HCT116 (cell line): ENCODE measurements at regions of chr12 and their contacts with region 1.

Region 1: DNA sequence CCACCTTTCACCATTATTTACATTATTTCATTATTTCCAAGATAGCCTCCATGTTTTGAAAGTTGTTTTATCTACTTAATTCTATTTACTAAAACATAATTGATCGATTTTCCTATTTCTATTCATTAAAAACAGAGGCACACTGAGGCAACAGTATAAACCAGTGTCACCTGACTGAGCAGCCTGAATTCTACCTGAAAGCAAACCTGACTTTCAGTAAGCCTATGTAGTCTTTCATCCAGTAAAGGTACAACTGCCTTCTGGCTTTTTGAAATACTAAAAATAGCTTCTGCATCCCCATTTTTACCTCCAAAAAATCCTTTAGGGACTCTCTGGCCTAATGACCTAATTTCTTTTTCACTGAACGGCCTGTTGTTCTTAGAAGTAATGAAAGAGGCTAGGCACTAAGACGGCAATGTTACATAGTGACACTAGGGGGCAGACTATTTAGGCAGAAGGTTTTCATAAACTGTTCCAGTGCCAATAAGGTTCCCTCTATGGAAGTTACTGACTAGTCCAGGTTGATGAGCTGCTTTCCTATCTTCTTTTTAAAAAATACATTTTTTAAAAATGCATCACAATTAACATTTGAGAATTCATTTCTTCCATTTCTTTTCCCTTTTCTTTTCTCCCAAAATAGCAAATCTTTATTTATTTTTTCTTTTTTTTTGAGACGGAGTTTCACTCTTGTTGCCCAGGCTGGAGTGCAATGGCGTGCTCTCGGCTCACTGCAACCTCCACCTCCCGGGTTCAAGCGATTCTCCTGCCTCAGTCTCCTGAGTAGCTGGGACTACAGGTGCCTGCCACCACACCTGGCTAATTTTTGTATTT is 17.5 kb downstream of the ANAPC5 start:
- DNase-seq: peak; percentile 46
- ATAC-seq: peak; percentile 94
- H3K4me3 ChIP-seq: no peak overlapping the region
- H3K27ac ChIP-seq: no peak overlapping the region
- H3K4me1 ChIP-seq: no peaks in the 10 kb centered on the region
- H3K27me3 ChIP-seq: no peaks in the 10 kb centered on the region
- CTCF ChIP-seq: peak; percentile 72 to 86 (median 74); a peak in 5 of 6 replicates
- POLR2A ChIP-seq: no peak
- RAD21 ChIP-seq: peak; percentile 67

Region 2: DNA sequence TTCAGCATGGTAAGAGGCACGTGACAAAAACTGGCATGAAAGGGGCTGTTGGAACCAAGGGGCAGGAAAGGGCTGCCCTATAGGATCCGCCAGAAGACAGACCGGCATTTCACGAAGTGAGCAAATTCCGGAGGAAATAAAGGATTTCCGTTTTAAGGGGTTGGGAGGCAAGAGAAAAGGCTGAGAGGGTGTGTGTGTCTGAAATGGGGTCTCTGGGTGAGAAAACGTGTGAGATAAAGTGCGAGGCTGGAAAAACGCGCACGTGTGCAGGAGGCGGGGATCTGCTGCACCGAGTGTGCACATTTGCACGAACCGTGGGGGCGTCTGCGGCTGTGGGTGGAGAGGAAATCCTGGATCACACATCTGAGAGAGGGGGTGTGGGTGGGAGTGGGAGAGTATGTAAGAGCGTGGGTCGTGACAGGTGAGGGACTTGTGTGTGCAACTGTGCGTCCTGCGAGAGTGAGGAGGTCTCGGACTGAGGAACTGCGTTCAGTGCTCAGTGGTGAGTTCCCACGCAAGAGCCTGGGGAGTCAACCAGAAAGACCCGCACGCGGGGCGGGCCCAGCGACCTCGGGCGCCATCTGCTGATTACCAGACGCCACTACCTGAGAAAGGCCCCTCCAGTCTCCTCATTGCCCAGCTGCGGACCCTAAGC is 239.1 kb before region 1 on chr12:
- CTCF ChIA-PET with region 1: no interaction called
- POLR2A ChIA-PET with region 1: no interaction called
- RAD21 ChIA-PET with region 1: no interaction called
- intact Hi-C with region 1: no loop called
- DNase-seq: peak; percentile 48
- ATAC-seq: peak; percentile 97
- H3K4me3 ChIP-seq: peak overlapping the region; percentile 36 to 52
- H3K27ac ChIP-seq: no peak overlapping the region
- H3K4me1 ChIP-seq: peaks cover 3 to 14% of the 10 kb centered on the region in 2 experiments; a peak in 3 of 4 replicates
- H3K27me3 ChIP-seq: no peaks in the 10 kb centered on the region
- CTCF ChIP-seq: peak; percentile 68 to 84 (median 70)
- POLR2A ChIP-seq: peak; percentile 23
- RAD21 ChIP-seq: peak; percentile 81

Region 3: DNA sequence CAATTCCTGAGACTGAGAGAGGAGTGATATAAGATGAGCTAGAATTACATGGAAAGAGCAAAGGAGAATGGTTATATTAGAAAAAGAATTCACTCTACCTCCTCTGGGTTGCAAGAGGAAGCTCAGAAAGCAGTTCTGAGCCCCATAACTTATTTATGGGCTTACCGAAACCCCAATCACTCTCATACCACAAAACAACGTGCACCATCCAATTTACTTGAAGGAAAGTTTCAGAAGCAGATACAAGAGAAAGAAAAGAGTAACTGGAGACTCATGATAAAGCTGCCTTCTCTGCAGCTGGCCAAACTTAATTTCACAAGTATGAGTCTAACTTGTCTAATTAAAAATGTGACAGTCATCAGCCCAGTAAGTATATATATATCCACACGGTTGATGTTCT is 10.8 kb before region 1 on chr12:
- CTCF ChIA-PET with region 1: interaction called, 15 read pairs
- POLR2A ChIA-PET with region 1: no interaction called
- RAD21 ChIA-PET with region 1: no interaction called
- intact Hi-C with region 1: no loop called
- DNase-seq: no peak
- ATAC-seq: no peak
- H3K4me3 ChIP-seq: no peak overlapping the region
- H3K27ac ChIP-seq: no peak overlapping the region
- H3K4me1 ChIP-seq: no peaks in the 10 kb centered on the region
- H3K27me3 ChIP-seq: no peaks in the 10 kb centered on the region
- CTCF ChIP-seq: no peak
- POLR2A ChIP-seq: no peak
- RAD21 ChIP-seq: no peak

Region 4: DNA sequence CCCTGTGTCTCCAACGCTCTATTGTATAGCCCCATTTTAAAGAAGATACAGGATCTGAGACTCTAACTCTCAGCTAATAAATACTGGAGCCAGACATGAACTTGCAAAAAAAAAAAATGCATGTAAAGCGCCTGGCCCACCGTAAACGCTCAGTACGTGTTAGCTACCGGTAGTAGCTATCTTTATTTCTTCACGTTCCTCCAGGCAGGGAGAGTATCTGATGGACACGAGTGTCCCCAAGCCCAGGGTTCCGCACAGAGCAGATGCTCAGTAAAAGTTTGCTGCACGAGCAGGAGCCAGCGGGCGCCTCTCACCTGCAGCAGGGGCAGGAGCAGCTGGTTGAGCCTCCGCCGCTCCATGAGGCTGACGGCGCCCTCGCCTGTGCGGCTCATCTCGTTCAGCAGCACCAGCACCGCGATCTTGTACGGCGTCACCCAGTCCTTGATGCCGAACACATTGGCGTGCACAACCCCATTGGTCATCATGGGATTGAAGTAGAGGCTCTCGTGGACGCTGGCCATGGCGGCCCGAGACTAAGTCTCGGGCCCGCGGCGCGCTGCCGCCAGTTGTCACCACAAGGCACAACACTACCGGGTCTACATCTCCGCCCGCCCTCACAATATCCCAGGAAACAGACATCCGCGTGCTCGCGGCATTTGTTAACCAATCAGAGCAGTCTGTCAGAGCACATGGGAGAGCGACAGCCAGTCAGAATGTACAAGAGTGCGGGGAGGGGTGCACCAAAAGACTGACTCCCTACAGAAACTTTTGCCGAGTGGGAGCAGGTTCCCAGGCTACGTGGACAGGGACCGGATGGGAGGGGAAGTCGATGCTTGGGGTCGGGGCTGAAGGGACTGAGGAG is 17.3 kb after region 1 on chr12 and contains the start of gene ANAPC5:
- CTCF ChIA-PET with region 1: no interaction called
- POLR2A ChIA-PET with region 1: interaction called, 6 read pairs
- RAD21 ChIA-PET with region 1: interaction called in 1 of 2 experiments, 11 read pairs
- intact Hi-C with region 1: no loop called
- DNase-seq: peak; percentile 98
- ATAC-seq: peak; percentile 96
- H3K4me3 ChIP-seq: peak within 1 kb of the TSS; percentile 74 to 100
- H3K27ac ChIP-seq: peak within 1 kb of the TSS; percentile 68
- H3K4me1 ChIP-seq: peaks cover 0 to 12% of the 10 kb centered on the region in 2 experiments; a peak in 3 of 4 replicates
- H3K27me3 ChIP-seq: no peaks in the 10 kb centered on the region
- CTCF ChIP-seq: no peak
- POLR2A ChIP-seq: peak; percentile 91
- RAD21 ChIP-seq: no peak
- total RNA-seq, gene ANAPC5: 112 TPM

Region 5: GRCh38 chr12:121443193-121443870 is 108.6 kb after region 1 on chr12:
- CTCF ChIA-PET with region 1: interaction called, 19 read pairs
- POLR2A ChIA-PET with region 1: interaction called, 3 read pairs
- RAD21 ChIA-PET with region 1: no interaction called
- intact Hi-C with region 1: loop called (anchors 1 kb)
- DNase-seq: peak; percentile 24
- ATAC-seq: peak; percentile 98
- H3K4me3 ChIP-seq: no peak overlapping the region
- H3K27ac ChIP-seq: no peak overlapping the region
- H3K4me1 ChIP-seq: peaks cover 0 to 3% of the 10 kb centered on the region in 2 experiments; a peak in 1 of 4 replicates
- H3K27me3 ChIP-seq: no peaks in the 10 kb centered on the region
- CTCF ChIP-seq: peak; percentile 81 to 92 (median 89)
- POLR2A ChIP-seq: no peak
- RAD21 ChIP-seq: peak; percentile 84